Mammary epithelial cell (primary cell): ENCODE measurements at regions of chr17 and their contacts with region 1.

Region 1: GRCh38 chr17:5592382-5592781 is 8.1 kb upstream of the NLRP1 start:
- DNase-seq: peak; percentile 31
- H3K4me3 ChIP-seq: no peak overlapping the region
- H3K27ac ChIP-seq: no peak overlapping the region
- H3K4me1 ChIP-seq: no peaks in the 10 kb centered on the region
- H3K27me3 ChIP-seq: peaks cover 5% of the 10 kb centered on the region
- CTCF ChIP-seq: peak; percentile 42 to 51

Region 2: DNA sequence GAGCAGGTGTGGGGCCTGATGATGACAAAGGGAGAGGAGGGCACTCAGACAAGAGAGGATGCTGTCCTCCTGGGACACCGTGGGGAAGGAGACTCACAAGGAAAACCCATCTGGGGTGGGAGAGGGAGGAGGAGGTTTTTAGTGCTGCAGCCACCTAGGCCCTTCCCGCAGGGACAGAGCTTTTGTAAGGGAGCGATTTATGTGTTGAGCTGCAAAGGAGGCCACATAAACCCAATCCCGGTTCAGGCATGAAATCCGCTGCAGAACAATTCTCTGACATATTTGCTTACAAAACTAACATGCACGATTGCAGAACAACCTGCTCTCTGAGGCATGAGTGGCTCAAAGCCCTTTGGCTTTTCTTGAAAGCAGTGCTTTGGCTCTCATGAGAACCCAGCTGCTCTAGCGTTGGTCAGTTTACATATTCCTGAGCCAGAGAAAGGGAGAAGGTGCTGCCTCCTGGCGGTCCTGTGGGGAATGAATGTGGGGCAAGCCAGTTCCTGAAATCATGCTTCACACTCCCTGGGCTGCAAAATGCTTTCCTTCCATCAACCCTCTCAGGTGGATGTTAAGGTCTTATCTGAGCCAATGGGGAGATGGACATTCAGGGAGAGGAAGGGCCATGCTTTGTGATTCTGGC is 114.3 kb after region 1 on chr17:
- CTCF ChIA-PET with region 1: no interaction called
- dilution Hi-C with region 1: no loop called
- in situ Hi-C with region 1: no loop called
- intact Hi-C with region 1: loop called (anchors 1 kb)
- DNase-seq: peak; percentile 26
- H3K4me3 ChIP-seq: no peak overlapping the region
- H3K27ac ChIP-seq: no peak overlapping the region
- H3K4me1 ChIP-seq: no peaks in the 10 kb centered on the region
- H3K27me3 ChIP-seq: peaks cover 8% of the 10 kb centered on the region
- CTCF ChIP-seq: peak; percentile 62 to 68

Region 3: GRCh38 chr17:6052926-6053325 is 460.5 kb after region 1 on chr17:
- CTCF ChIA-PET with region 1: no interaction called
- dilution Hi-C with region 1: no loop called
- in situ Hi-C with region 1: no loop called
- intact Hi-C with region 1: loop called (anchors 2 kb)
- DNase-seq: peak; percentile 69
- H3K4me3 ChIP-seq: no peak overlapping the region
- H3K27ac ChIP-seq: no peak overlapping the region
- H3K4me1 ChIP-seq: no peaks in the 10 kb centered on the region
- H3K27me3 ChIP-seq: peaks cover 4% of the 10 kb centered on the region
- CTCF ChIP-seq: no peak

Region 4: DNA sequence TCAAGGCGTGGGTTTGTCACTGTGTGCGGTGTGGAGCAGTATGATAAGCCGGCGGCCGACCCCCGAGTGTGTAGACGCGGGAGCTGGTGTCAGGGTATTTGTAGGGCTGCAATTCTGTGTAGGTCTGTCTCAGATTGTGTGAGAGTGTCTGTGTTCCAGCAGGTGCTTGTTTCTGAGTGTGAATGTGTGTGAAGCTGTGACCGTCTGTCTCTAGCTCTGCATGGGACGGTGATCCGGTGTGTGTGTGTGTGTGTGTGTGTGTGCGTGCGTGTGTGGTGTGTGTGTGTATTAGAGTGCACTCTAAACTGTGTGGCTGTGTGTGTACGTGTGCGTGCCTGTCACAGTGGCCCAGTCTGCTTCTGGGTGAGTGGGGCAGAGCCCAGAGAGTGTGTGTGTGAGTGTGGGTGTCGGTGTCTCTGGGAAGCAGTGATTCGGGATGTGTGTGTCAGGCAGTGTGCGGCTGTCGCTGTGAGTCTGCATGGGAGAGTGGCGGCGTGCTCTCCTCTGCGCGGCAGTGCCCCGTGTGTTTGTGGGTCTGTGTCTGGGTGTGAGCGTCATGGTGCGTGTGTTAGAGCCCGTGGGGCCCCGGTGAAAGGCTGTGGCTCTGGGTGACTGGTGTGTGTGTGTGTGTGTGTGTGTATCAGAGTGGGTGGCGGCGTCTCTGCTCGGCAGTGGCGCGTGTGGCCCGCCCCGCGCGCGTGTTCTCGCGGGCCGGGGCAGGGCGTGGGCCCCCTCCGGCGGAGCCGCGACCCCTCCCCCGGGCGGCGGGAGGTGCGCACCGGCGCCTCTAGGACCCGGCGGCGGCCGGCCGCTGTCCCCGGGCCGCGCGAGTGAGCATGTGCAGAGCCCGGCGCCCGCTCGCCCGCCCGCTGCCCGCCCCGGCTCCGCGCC is 477.4 kb after region 1 on chr17 and contains the start of gene WSCD1:
- CTCF ChIA-PET with region 1: interaction called, 3 read pairs
- dilution Hi-C with region 1: no loop called
- in situ Hi-C with region 1: no loop called
- intact Hi-C with region 1: loop called (anchors 1 kb)
- DNase-seq: no peak
- H3K4me3 ChIP-seq: no peak within 1 kb of the TSS
- H3K27ac ChIP-seq: no peak within 1 kb of the TSS
- H3K4me1 ChIP-seq: no peaks in the 10 kb centered on the region
- H3K27me3 ChIP-seq: peaks cover 18% of the 10 kb centered on the region
- CTCF ChIP-seq: no peak
- total RNA-seq, gene WSCD1: not detected

Region 5: DNA sequence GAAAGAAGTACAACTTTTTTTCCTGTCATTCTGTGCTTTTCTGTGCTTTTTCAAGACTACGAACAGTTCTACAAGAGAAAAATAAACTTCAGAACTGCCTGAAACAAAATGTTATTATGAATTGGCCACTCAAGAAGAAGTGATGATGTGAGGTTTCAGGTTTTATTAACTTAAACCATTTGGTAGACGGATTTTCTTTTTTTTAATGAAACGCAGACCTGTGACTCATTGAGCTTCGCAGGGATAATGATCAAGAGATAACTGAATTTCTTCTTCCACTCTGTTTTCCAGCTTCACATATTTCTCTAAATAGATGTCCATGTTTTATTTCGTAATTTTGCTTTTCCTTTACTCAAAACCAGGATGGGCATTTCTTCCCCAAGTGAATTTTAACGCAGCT is 809.9 kb after region 1 on chr17:
- CTCF ChIA-PET with region 1: no interaction called
- dilution Hi-C with region 1: no loop called
- in situ Hi-C with region 1: loop called in 1 of 2 experiments (anchors 10 kb)
- intact Hi-C with region 1: no loop called
- DNase-seq: no peak
- H3K4me3 ChIP-seq: no peak overlapping the region
- H3K27ac ChIP-seq: no peak overlapping the region
- H3K4me1 ChIP-seq: no peaks in the 10 kb centered on the region
- H3K27me3 ChIP-seq: peaks cover 1% of the 10 kb centered on the region
- CTCF ChIP-seq: no peak

Region 6: DNA sequence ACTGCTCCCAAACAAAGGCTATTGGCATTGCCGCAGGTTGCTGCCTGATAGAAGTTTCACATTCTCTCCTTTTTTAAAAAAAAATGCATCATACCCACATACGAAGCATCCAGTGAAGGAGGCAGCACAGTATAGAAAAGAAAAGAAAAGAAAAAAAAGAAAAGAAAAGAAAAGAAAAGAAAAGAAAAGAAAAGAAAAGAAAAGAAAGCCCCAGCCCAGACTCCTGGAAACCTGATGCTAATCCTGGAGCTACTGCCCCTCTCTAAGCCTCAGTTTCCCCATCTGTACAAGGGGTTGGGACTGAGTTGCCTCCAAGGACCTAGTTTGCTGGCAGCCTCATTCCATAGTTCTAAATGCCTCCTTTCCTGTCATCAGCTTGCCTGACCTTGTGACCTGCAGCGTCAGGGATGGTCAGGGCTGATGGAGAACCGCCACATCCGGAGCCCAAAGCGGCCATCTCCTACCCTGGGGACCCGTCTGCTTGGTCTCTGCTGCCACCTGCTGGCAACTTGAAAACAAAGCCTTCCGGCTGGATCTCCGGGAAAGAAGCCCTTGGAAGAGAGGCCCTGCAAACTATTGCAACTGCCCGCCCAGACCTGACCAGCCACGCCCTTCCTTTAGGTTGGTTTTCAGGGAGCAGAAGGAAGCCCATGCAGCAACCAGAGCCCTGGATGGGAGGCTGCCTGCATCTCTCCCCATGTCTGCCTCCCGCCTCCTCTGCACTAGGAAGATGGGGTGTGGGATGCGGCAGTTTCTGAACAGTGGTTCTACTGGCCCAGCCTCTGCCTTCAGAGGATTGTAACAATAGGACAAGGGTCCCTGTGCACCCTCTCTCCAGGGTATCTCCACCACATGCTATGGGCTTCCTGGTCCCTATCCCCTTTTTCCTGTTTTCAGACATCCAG is 829.6 kb after region 1 on chr17:
- CTCF ChIA-PET with region 1: interaction called, 4 read pairs
- dilution Hi-C with region 1: loop called (anchors 5 kb)
- in situ Hi-C with region 1: loop called (anchors 5 kb)
- intact Hi-C with region 1: loop called (anchors 1 kb)
- DNase-seq: peak; percentile 70
- H3K4me3 ChIP-seq: no peak overlapping the region
- H3K27ac ChIP-seq: no peak overlapping the region
- H3K4me1 ChIP-seq: no peaks in the 10 kb centered on the region
- H3K27me3 ChIP-seq: no peaks in the 10 kb centered on the region
- CTCF ChIP-seq: peak; percentile 71 to 95